Activated B cell treated with CpG ODN at 0.5 μM for 24 hours (primary cell): ENCODE measurements at regions of chr1 and their contacts with region 1.

Region 1: DNA sequence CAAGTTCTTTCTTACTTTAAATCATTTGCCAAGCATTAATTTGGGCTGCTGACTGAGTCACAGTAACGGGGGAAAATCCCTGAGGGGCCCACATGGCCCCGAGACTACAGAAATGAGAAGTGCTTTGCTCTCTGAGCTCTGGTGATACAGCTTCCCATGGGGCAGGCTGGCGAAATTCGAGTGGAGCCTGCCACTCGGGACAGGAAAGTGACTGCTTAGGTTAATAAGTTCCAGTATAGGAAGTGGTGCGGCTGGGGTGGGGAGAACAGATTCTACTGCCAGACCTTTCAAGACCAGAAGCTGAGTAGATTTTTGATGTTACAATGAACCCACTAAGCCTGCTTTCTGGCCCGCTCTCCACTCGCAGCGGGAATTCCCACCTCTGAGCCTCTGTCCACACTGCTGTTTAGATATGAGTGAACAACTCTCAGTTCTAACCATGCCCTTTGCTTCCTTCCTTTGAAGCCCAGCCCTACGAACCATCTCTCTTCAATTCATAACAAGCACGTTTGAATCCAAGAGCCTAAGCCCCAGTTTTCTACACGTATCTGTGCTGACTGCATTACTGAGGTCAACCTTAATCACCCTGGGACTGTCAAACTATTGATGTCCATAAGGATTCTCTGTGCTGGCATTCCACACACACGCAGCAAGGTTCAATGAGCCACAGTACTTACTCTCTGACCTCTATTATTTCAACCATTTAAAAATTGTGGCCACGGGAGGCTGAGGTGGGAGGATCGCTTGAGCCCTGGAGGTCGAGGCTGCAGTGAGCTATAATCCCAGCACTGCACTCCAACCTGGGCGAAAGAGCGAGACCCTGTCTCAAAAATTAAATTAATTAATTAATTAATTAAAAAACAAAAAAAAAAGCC is 9.6 kb downstream of the ZBTB17 start:
- DNase-seq: peak; percentile 75
- ATAC-seq: peak; percentile 79
- H3K4me3 Mint-ChIP-seq: peak overlapping the region; percentile 80
- H3K27ac Mint-ChIP-seq: peak overlapping the region; percentile 88
- H3K4me1 Mint-ChIP-seq: peaks cover 79% of the 10 kb centered on the region
- H3K27me3 Mint-ChIP-seq: no peaks in the 10 kb centered on the region
- CTCF ChIP-seq: no peak

Region 2: DNA sequence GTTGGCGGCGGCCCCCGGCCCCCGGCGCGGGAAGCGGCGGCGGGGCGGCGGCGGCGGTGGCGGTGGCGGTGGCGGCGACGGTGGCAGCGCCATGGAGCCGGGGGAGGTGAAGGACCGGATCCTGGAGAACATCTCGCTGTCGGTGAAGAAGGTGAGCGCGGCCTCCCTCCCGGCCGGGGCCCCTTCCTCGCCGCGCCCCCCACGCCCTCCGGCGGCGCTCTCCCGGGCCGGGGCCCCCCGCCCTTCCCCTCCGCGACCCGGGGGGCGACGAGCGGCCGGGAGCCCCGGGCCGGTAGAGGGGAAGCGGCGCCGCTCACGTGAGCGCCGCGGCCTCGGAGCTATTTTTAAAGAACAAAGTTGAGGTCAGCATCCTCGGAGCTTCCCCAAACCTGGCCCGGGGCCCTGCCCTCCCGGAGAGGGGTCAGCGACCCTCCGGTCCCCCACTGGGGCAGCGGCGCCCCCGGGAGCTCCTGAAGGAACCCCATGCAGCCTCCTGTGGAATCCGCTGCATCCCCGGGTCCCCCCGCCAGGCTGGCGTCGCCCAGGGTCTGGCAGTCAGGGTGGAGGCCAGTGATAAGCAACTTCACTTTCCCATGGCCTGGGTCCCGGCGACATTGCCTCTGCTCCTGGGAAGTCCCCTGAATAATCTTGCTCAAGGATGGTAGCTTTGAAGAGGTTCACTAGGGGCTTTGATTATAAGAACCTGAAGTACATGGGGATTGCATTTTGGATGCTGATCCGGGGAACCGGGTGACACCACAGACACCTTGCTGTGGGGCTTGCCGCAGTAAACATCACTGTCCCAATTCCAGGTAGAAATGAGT is 281.6 kb before region 1 on chr1:
- CTCF ChIA-PET with region 1: no interaction called
- POLR2A ChIA-PET with region 1: interaction called, 4 read pairs
- intact Hi-C with region 1: loop called (anchors 10 kb)
- DNase-seq: peak; percentile 46
- ATAC-seq: peak; percentile 6
- H3K4me3 Mint-ChIP-seq: peak overlapping the region; percentile 88
- H3K27ac Mint-ChIP-seq: peak overlapping the region; percentile 81
- H3K4me1 Mint-ChIP-seq: peaks cover 70% of the 10 kb centered on the region
- H3K27me3 Mint-ChIP-seq: no peaks in the 10 kb centered on the region
- CTCF ChIP-seq: no peak

Region 3: GRCh38 chr1:15797614-15798390 is 168.5 kb before region 1 on chr1:
- CTCF ChIA-PET with region 1: no interaction called
- POLR2A ChIA-PET with region 1: no interaction called
- intact Hi-C with region 1: no loop called
- DNase-seq: no peak
- ATAC-seq: no peak
- H3K4me3 Mint-ChIP-seq: no peak overlapping the region
- H3K27ac Mint-ChIP-seq: no peak overlapping the region
- H3K4me1 Mint-ChIP-seq: peaks cover 7% of the 10 kb centered on the region
- H3K27me3 Mint-ChIP-seq: peaks cover 5% of the 10 kb centered on the region
- CTCF ChIP-seq: no peak

Region 4: DNA sequence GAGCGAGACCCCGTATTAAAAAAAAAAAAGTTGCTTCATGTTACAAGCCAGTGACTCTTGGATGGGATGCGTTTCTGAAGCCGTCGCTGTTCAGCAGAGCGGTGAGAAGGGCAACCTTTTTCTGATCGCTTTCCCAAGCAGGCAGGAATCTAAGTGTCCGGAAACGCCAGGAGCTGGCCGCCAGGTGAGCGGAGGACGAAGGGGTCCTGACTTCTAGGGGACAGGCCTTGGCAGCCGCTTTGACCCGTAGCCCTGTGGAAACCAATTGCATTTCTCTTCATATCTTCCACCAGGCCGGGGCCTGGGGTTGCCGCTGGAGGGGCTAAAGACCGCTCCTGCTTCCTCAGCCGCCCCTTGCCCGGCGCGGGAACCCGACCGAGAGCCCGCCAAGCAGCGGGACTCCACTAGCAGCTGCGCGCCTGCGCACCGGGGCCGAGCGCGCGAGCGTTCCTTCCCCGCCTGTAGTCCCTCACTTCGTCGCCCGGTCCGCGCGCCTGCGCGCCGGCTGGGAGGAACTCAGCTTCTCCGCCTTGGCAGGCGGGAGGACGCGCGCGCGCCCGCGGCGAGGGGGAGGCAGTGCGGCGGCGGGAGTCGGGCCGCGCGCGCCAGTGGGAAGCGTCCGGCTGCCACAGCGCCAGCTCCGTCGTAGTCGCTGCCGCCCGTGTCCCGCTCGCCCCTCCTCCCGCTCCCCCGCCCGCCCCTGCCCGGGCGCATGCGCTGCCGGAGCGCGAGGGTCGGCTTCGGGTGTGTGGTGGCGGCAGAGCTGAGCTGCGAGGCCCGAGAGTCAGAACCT is 119.0 kb before region 1 on chr1 and contains the start of gene SPEN:
- CTCF ChIA-PET with region 1: no interaction called
- POLR2A ChIA-PET with region 1: interaction called, 20 read pairs
- intact Hi-C with region 1: loop called (anchors 1 kb)
- DNase-seq: peak; percentile 99
- ATAC-seq: peak; percentile 74
- H3K4me3 Mint-ChIP-seq: peak within 1 kb of the TSS; percentile 99
- H3K27ac Mint-ChIP-seq: peak within 1 kb of the TSS; percentile 98
- H3K4me1 Mint-ChIP-seq: peaks cover 62% of the 10 kb centered on the region
- H3K27me3 Mint-ChIP-seq: no peaks in the 10 kb centered on the region
- CTCF ChIP-seq: no peak
- total RNA-seq, gene SPEN: 116 and 123 TPM in 2 replicates

Region 5: GRCh38 chr1:15918962-15919715 is 47.2 kb before region 1 on chr1:
- CTCF ChIA-PET with region 1: no interaction called
- POLR2A ChIA-PET with region 1: interaction called, 13 read pairs
- intact Hi-C with region 1: no loop called
- DNase-seq: no peak
- ATAC-seq: peak; percentile 70
- H3K4me3 Mint-ChIP-seq: no peak overlapping the region
- H3K27ac Mint-ChIP-seq: peak overlapping the region; percentile 32
- H3K4me1 Mint-ChIP-seq: peaks cover 31% of the 10 kb centered on the region
- H3K27me3 Mint-ChIP-seq: no peaks in the 10 kb centered on the region
- CTCF ChIP-seq: no peak

Region 6: GRCh38 chr1:15994590-15995351 is 28.5 kb after region 1 on chr1:
- CTCF ChIA-PET with region 1: interaction called, 5 read pairs
- POLR2A ChIA-PET with region 1: interaction called, 4 read pairs
- intact Hi-C with region 1: loop called (anchors 1 kb)
- DNase-seq: no peak
- ATAC-seq: peak; percentile 94
- H3K4me3 Mint-ChIP-seq: no peak overlapping the region
- H3K27ac Mint-ChIP-seq: no peak overlapping the region
- H3K4me1 Mint-ChIP-seq: no peaks in the 10 kb centered on the region
- H3K27me3 Mint-ChIP-seq: no peaks in the 10 kb centered on the region
- CTCF ChIP-seq: no peak